ENCODE measurements at regions of chr19 and their contacts with region 1.

Region 1: GRCh38 chr19:7083076-7083956 is 13.8 kb downstream of the ZNF557 start:
- DNase-seq: no peak
- H3K4me3 ChIP-seq: no peak overlapping the region
- H3K27ac ChIP-seq: no peak overlapping the region
- H3K27me3 ChIP-seq: no peaks in the 10 kb centered on the region
- CTCF ChIP-seq: no peak

Region 2: GRCh38 chr19:6979399-6979798 is 103.9 kb before region 1 on chr19:
- CTCF ChIA-PET with region 1: no interaction called
- POLR2A ChIA-PET with region 1: interaction called, 10 read pairs
- DNase-seq: no peak
- H3K4me3 ChIP-seq: no peak overlapping the region
- H3K27ac ChIP-seq: no peak overlapping the region
- H3K27me3 ChIP-seq: no peaks in the 10 kb centered on the region
- CTCF ChIP-seq: no peak

Region 3: DNA sequence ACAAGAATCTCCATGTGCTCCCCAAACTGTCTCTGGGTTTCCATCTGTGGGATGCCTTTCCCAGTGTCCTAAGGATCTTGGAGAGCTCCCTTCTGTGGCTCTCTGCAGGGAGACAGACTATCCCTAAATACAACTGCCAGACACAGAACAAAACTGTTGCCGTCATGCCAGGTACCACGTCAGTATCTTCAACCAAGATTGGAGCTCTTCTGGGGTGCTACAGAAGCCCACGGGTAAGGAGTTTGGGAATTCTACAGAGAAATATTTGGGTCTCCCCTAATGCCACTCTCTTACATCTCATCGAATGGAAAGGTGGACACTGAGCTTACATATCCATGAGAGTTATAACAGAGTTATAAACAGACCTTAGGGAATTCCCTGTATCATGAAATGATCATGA is 20.0 kb before region 1 on chr19:
- CTCF ChIA-PET with region 1: no interaction called
- POLR2A ChIA-PET with region 1: no interaction called
- DNase-seq: no peak
- H3K4me3 ChIP-seq: no peak overlapping the region
- H3K27ac ChIP-seq: no peak overlapping the region
- H3K27me3 ChIP-seq: no peaks in the 10 kb centered on the region
- CTCF ChIP-seq: no peak

Region 4: DNA sequence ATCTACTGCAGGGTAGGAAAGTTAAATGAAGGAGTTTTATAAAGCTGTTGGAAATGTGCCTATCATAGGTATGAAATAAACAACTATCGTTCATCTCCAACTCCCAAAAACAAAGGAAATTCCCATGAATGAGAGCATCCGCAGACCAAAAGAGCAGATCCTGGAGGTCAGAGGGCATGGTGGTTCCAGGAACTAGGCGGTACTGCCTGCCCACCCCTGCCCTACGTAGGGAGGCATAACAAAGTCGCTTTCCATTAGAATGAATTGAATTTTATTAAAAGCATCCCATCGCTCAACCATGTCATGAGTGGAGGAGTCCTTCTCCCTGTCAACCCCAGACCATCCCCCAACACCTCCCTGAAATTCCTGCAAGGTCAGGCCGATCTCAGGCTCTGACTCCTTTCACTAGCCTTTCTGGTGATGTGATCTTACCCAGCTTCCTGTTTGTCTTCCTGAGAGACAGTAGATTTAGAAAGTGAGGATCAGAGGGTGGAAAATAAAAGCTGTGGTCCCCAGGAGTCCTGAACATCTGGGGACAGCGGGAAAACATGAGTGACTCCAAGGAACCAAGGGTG is 679.5 kb after region 1 on chr19 and contains the start of gene CLEC4M:
- CTCF ChIA-PET with region 1: no interaction called
- POLR2A ChIA-PET with region 1: interaction called, 12 read pairs
- DNase-seq: no peak
- H3K4me3 ChIP-seq: no peak within 1 kb of the TSS
- H3K27ac ChIP-seq: no peak within 1 kb of the TSS
- H3K27me3 ChIP-seq: no peaks in the 10 kb centered on the region
- CTCF ChIP-seq: no peak
- polyA plus RNA-seq, gene CLEC4M: not detected in 2 replicates

Measured in AG04450 (cell line).